Activated CD8-positive, alpha-beta T cell treated with anti-CD3 and anti-CD28 coated beads, Interleukin-2, amount 10 ng/mL, durations not matched to agents 7 days and 5 days (primary cell): ENCODE measurements at regions of chr17 and their contacts with region 1.

Region 1: DNA sequence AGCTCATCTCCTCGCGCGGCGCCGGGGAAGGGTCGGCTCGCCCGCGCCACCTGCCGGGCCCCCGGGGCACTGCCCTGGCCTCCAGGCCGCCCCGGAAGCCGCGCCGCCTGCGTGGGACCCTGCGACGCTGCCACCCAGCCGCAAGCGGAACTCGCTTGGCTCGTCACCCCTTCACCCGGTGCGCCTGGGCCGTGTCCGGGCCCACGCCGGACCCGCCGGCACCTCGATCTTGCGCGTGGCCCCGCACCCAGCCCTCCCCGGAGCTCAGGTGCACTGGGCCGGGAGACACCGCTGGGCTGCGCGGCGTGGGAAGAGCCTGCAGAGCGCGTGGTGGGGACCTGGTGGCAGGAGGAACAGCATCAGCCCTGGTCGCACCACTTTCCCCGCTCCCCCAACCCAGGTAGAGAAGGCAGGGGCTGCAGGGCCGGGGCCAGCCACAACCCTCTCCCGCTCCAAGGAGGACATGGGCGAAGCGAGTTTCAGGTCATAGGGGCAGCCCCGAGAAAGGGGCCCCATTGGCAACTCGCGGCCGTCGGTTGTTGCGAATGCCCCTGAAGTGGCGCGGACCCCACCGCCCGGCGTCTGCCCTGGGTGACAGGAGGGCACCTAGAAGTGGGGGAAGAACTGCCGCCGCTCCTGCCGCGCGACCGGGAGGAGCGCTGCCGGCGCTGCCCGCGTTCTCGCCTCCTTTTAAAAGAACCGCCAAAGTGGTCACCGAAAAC is 363 bp upstream of the MIF4GD start:
- DNase-seq: peak; percentile 89
- ATAC-seq: peak; percentile 85
- H3K4me3 Mint-ChIP-seq: peak overlapping the region; percentile 81
- H3K27ac Mint-ChIP-seq: peak overlapping the region; percentile 86
- H3K4me1 Mint-ChIP-seq: peaks cover 36% of the 10 kb centered on the region
- H3K27me3 Mint-ChIP-seq: no peaks in the 10 kb centered on the region

Region 2: DNA sequence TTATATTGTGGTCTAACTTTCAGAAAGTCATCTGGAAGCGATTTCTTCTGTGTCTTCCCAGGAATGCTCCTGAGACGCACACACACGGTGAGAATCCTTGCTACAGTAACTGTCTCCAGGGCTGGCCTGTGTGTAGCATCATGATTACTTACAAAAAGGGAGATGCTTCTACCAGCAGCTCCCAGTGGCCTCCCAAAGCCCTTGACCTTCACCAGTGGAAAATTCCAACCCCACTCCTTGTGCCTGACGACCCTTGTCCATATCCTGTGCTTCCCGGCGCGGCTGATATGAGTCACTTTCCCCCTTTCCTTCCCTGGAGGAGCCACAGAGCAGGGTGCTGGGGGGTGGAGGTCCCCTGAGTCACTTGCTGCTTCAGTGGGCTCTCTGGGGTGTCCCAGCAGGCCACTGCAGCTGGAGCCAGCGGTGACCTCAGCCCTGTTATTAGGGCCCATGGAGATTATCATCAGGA is 473.1 kb before region 1 on chr17:
- CTCF ChIA-PET with region 1: no interaction called
- POLR2A ChIA-PET with region 1: no interaction called
- DNase-seq: no peak
- ATAC-seq: no peak
- H3K4me3 Mint-ChIP-seq: no peak overlapping the region
- H3K27ac Mint-ChIP-seq: no peak overlapping the region
- H3K4me1 Mint-ChIP-seq: peaks cover 16% of the 10 kb centered on the region
- H3K27me3 Mint-ChIP-seq: no peaks in the 10 kb centered on the region

Region 3: GRCh38 chr17:75238684-75239191 is 32.7 kb before region 1 on chr17:
- CTCF ChIA-PET with region 1: interaction called, 33 read pairs
- POLR2A ChIA-PET with region 1: interaction called, 6 read pairs
- DNase-seq: peak; percentile 76
- ATAC-seq: peak; percentile 86
- H3K4me3 Mint-ChIP-seq: no peak overlapping the region
- H3K27ac Mint-ChIP-seq: no peak overlapping the region
- H3K4me1 Mint-ChIP-seq: peaks cover 23% of the 10 kb centered on the region
- H3K27me3 Mint-ChIP-seq: no peaks in the 10 kb centered on the region

Region 4: GRCh38 chr17:75250009-75250471 is 21.4 kb before region 1 on chr17:
- CTCF ChIA-PET with region 1: interaction called, 26 read pairs
- POLR2A ChIA-PET with region 1: interaction called, 14 read pairs
- DNase-seq: peak; percentile 75
- ATAC-seq: peak; percentile 94
- H3K4me3 Mint-ChIP-seq: peak overlapping the region; percentile 60
- H3K27ac Mint-ChIP-seq: peak overlapping the region; percentile 86
- H3K4me1 Mint-ChIP-seq: peaks cover 25% of the 10 kb centered on the region
- H3K27me3 Mint-ChIP-seq: no peaks in the 10 kb centered on the region

Region 5: DNA sequence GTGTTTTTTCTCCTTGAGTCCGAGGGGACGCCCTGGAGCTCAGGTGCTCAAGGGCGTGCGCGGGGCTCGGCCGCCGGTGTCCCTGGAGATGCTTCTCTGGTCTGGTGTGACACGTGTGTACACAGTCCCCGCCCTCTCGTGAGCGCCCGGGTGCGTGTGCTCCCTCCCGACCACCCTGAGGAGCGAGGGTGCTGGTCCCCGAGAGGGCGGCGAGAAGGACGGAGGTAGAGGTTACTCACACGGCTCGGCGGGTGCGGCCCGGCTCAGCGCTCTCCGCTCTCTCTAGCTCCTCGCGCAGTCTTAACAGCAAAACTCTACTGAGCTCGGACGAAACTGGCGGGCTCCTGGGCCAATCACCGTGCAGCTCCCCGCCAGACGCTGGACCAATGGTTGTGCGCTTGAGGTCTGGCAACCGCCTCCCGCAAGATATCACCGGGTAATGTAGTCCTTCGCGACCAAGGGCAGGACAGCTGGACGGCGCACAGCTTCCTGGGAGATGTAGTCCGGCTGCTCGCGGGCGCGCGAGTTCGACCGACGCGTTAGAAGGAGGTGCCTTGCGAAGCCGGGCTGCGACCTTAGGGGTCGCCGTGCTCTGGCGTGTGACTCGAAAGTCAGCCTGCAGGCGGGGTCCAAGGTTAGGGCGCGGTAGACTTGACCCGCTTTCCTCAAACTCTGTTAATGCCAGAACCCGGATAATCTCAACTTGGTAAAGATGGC is 17.9 kb after region 1 on chr17 and contains the start of gene SLC25A19:
- CTCF ChIA-PET with region 1: interaction called, 75 read pairs
- POLR2A ChIA-PET with region 1: interaction called, 76 read pairs
- DNase-seq: peak; percentile 99
- ATAC-seq: peak; percentile 92
- H3K4me3 Mint-ChIP-seq: peak within 1 kb of the TSS; percentile 97
- H3K27ac Mint-ChIP-seq: peak within 1 kb of the TSS; percentile 100
- H3K4me1 Mint-ChIP-seq: peaks cover 27% of the 10 kb centered on the region
- H3K27me3 Mint-ChIP-seq: no peaks in the 10 kb centered on the region
- total RNA-seq, gene SLC25A19: 41.1 to 43.6 TPM

Region 6: GRCh38 chr17:75295201-75296158 is 24.1 kb after region 1 on chr17:
- CTCF ChIA-PET with region 1: interaction called, 15 read pairs
- POLR2A ChIA-PET with region 1: interaction called, 76 read pairs
- DNase-seq: no peak
- ATAC-seq: no peak
- H3K4me3 Mint-ChIP-seq: no peak overlapping the region
- H3K27ac Mint-ChIP-seq: peak overlapping the region; percentile 81
- H3K4me1 Mint-ChIP-seq: peaks cover 26% of the 10 kb centered on the region
- H3K27me3 Mint-ChIP-seq: no peaks in the 10 kb centered on the region

Region 7: DNA sequence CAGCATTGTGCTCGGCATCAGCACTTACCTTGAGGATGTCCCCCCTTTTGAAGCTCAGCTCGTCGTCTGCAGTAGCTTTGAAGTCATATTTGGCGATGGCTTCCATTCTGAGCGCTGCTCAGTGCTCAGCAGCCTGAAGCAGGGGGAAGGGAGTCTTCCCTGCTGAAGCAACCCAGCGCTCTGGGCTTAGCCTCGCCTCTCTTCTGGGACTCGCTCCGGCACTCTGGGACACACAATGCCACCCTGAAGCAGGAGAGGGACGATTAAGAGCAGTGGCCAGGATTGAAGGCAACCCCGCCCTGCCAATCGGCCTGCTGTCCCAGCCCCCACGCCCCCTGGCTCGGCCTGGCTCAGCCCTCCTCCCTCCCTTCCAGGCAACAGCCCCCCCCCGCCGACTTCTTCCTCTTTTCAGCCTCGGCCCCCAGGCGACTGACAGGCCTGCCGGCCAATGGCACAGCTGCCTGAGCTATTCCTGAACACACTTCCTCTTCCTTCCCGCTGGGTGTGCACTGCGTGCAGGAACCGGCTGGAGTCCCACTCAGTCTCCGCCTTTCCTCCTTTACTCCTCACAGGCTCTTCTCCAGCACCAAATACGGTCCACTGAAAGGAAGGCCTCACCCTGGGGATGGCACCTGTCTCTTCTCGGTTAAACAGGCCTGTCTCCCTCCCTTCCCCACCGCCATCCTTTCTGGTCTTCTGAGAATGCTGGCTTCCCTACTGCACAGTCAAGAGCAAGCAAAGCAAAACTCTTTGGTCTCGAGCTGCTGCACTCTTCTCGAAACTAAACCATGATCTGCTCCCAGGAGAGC is 122.3 kb after region 1 on chr17:
- CTCF ChIA-PET with region 1: interaction called, 25 read pairs
- POLR2A ChIA-PET with region 1: no interaction called
- DNase-seq: peak; percentile 89
- ATAC-seq: peak; percentile 95
- H3K4me3 Mint-ChIP-seq: peak overlapping the region; percentile 89
- H3K27ac Mint-ChIP-seq: peak overlapping the region; percentile 73
- H3K4me1 Mint-ChIP-seq: peaks cover 68% of the 10 kb centered on the region
- H3K27me3 Mint-ChIP-seq: no peaks in the 10 kb centered on the region

Region 8: DNA sequence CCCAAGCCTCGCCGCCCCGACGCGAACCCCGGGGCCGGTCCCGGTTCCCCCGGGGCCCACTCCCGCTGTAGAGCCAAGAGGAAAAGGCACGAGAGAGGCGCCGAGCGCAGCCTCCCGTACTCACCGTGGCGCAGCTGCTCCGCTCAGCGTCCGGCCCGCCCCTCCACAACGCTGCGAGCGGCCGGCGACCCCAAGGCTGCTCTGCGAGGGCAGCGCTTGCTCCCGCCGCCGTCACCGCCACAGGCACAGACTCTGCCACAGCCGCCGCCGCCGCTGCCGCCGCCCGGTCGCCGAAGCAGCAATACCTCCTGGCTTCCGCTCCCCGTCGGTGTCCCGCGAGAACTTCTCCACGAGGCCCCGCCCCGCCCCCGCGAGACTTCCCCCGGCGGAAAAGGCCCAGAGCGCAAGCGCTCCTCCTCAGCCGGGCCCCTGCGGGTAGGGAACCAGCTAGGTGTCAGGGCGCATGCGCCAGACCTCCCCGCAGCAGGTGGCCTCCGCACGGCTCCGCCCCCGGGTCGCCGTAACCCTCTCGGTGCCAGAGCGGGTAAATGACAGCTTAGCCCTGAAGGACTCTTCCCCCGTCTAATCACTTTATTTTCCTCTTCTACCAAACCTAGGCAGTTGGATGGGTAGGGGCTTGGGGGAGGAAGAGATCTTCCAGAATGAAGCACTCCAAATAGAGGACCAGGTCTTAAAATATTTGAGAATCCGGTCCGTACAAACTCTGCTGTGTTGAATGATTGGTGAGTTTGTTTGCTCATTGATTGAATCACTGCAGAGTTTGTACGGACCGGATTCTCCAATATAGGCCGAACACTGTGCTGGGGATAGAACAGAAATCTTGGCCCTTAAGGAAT is 134.2 kb after region 1 on chr17 and contains the start of gene GRB2:
- CTCF ChIA-PET with region 1: interaction called, 19 read pairs
- POLR2A ChIA-PET with region 1: interaction called, 14 read pairs
- DNase-seq: peak; percentile 100
- ATAC-seq: peak; percentile 87
- H3K4me3 Mint-ChIP-seq: peak within 1 kb of the TSS; percentile 97
- H3K27ac Mint-ChIP-seq: peak within 1 kb of the TSS; percentile 95
- H3K4me1 Mint-ChIP-seq: peaks cover 49% of the 10 kb centered on the region
- H3K27me3 Mint-ChIP-seq: no peaks in the 10 kb centered on the region
- total RNA-seq, gene GRB2: 166 to 178 TPM